ENCODE measurements at regions of chr22 and their contacts with region 1.

Region 1: DNA sequence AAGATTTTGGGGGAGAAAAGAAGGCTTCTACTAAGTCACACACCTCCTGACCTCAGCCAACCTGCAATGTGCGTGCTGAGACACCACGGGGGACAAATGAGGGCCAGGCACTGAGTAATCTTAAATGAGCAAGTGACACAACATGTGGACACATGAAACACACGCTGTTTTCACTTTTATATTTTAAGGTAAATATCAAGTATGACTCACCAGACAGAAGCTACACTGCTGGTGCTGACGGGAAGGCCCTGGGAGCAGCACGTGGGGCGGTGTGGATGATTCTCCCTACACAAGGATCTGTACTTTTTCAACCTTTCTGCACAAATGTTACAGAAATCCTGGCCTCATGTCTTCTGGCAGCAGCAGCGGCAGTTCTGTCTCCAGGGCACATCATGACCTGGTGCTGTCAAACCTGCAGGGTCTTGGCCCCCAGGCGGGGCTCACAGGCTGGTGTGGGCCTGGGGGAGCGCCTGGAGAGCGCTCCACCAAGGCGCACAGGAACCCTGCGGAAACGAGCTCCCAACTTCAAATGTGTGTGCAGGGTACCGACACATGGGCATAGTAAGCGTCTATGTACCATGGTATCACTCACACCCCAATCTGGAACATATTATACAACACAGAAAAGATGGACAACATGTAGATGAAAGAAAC is 61.7 kb downstream of the DGCR2 start:
- DNase-seq: peak; percentile 86
- ATAC-seq: peak; percentile 89
- H3K4me3 ChIP-seq: no peak overlapping the region
- H3K27ac ChIP-seq: no peak overlapping the region
- H3K4me1 ChIP-seq: peaks cover 15% of the 10 kb centered on the region
- H3K27me3 ChIP-seq: no peaks in the 10 kb centered on the region
- CTCF ChIP-seq: no peak
- POLR2A ChIP-seq: no peak
- RAD21 ChIP-seq: no peak

Region 2: GRCh38 chr22:19079691-19080090 is 19.2 kb after region 1 on chr22:
- CTCF ChIA-PET with region 1: no interaction called
- POLR2A ChIA-PET with region 1: no interaction called
- dilution Hi-C with region 1: no loop called
- in situ Hi-C with region 1: no loop called
- intact Hi-C with region 1: no loop called
- DNase-seq: no peak
- ATAC-seq: no peak
- H3K4me3 ChIP-seq: no peak overlapping the region
- H3K27ac ChIP-seq: no peak overlapping the region
- H3K4me1 ChIP-seq: no peaks in the 10 kb centered on the region
- H3K27me3 ChIP-seq: no peaks in the 10 kb centered on the region
- CTCF ChIP-seq: no peak
- POLR2A ChIP-seq: no peak
- RAD21 ChIP-seq: no peak

Region 3: DNA sequence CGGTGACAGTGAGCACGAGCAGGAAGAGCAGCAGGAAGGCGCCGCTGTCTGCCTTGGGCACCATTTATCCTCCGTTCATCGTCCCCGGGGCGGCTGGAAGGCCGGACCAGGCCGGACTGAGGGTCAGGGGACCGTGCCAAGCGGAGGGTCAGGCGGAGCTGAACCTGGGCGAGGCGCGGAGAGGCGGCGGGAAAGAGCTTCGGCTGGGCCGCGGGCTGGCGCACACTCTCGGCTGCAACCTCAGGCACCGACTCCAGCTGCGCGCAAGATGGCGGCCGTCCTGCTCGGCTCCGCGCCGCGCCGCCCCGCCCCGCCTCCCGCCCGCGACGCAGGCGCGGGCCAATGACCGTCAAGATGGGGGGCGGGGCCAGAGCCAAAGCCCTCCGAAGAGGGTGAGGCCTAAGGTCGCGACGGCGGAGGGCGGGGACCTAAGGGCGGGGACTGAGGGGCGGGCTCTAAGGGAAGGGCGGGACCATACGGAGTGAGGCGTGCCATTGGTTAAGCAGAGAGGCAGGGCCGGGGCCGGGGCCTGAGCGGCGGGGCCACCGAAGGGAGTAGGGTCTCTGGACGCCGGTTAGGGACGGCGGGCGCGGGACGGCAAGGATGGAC is 61.8 kb after region 1 on chr22 and contains the start of gene DGCR2:
- CTCF ChIA-PET with region 1: no interaction called
- POLR2A ChIA-PET with region 1: no interaction called
- dilution Hi-C with region 1: no loop called
- in situ Hi-C with region 1: no loop called
- intact Hi-C with region 1: loop called (anchors 5 kb)
- DNase-seq: peak; percentile 94
- ATAC-seq: peak; percentile 98
- H3K4me3 ChIP-seq: peak within 1 kb of the TSS; percentile 99
- H3K27ac ChIP-seq: peak within 1 kb of the TSS; percentile 94
- H3K4me1 ChIP-seq: peaks cover 16% of the 10 kb centered on the region
- H3K27me3 ChIP-seq: no peaks in the 10 kb centered on the region
- CTCF ChIP-seq: no peak
- POLR2A ChIP-seq: peak; percentile 68; the same call in 1 of the 2 replicates
- RAD21 ChIP-seq: no peak
- total RNA-seq, gene DGCR2: 17.2 and 18.6 TPM in 2 replicates

Measured in IMR-90 (cell line).